Activated CD4-positive, alpha-beta memory T cell treated with anti-CD3 and anti-CD28 coated beads, Interleukin-2, amount 10 ng/mL, durations not matched to agents 7 days and 5 days (primary cell): ENCODE measurements at regions of chr5 and their contacts with region 1.

Region 1: DNA sequence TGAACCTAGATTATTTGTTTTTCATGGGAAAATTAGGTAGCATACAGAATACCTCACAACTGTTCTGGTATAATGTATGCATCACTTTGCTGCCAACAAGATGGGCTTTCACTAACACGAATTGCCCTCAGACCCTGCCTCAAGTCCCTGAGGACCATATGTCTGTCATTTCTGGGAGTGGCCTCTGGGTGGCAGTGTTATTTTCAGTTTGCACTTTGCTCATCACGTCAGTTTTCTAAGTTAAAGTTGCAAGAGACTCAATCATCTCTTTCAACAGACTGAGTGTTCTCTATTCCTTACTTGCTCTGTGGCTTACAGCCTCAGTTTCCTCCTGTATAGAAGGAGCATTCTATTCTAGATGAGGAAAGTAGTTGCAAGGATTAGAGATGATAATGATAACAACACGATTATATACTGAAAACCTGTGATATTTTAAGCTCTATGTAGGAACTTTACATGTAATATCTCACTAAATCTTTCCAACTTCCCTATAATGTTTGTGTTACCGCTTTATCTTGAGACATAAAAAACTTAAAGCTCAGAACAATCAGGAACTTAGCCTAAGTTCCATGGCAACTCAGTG is 55.7 kb downstream of the TSSK1B start:
- DNase-seq: peak; percentile 65
- H3K4me3 Mint-ChIP-seq: peak overlapping the region; percentile 2
- H3K27ac Mint-ChIP-seq: peak overlapping the region; percentile 44
- H3K4me1 Mint-ChIP-seq: peaks cover 46% of the 10 kb centered on the region
- H3K27me3 Mint-ChIP-seq: no peaks in the 10 kb centered on the region

Region 2: GRCh38 chr5:113390224-113390623 is 11.2 kb after region 1 on chr5:
- CTCF ChIA-PET with region 1: interaction called, 20 read pairs
- POLR2A ChIA-PET with region 1: no interaction called
- DNase-seq: no peak
- H3K4me3 Mint-ChIP-seq: no peak overlapping the region
- H3K27ac Mint-ChIP-seq: no peak overlapping the region
- H3K4me1 Mint-ChIP-seq: peaks cover 2% of the 10 kb centered on the region
- H3K27me3 Mint-ChIP-seq: peaks cover 4% of the 10 kb centered on the region